OCI-LY7 (cell line): ENCODE measurements at regions of chr11 and their contacts with region 1.

Region 1: DNA sequence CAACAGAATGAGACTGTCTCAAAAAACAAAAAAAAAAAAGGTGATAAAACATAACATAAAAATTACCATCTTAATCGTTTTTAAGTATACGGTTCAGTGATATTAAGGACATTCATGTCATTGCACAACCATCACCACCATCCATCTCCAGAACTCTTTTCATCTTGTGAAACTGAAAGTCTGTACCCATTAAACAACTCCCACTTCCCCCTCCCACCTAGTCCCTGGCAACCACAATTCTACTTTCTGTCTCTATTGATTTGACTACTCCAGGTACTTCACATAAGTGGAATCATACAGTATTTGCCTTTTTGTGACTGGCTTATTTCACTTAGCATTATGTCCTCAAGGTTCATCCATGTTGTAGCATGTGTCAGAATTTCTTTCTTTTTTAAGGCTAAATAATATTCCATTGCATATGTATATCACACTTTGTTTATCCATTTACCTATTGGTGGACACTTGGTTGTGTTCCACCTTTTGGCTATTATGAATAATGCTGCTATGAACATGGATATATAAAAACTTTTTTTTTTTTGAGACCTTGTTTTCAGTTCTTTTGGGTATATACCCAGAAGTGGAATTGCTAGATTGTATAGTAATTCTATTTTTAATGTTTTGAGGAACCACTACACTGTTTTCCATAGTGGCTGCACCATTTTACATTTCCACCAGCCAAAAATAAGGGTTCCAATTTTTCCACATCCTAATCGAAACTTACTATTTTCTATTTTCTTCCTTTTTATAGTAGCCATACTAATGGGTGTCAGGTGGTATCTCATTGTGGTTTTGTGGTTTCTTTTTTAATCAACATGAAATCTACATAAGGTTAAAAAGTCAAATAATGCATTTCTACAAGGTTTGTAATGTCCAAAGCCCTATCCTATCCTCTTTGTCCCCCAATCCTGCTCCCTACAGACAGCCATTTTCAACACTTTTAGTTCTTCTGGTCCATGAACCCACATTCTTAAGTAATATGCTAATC is 23.4 kb upstream of the PIK3C2A start:
- DNase-seq: peak; percentile 27
- H3K4me3 ChIP-seq: no peak overlapping the region
- H3K27ac ChIP-seq: no peak overlapping the region
- H3K4me1 ChIP-seq: peaks cover 20% of the 10 kb centered on the region
- CTCF ChIP-seq: no peak

Region 2: DNA sequence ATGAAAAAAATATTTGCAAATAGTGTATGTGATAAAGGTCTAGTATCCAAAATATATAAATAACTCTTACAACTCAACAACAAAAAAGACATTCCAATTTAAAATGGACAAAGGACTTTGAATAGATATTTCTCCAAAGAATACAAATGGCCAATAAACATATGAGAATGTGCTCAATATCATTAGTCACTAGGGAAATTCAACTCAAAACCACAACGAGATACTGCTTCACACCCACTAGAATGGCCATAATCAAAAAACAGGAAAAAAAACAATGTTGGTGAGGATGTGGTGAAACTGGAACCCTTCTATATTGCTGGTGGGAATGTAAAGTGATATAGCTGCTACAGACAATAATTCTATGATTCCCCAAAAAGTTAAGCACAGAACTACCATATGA is 115.0 kb before region 1 on chr11:
- CTCF ChIA-PET with region 1: no interaction called
- POLR2A ChIA-PET with region 1: no interaction called
- intact Hi-C with region 1: no loop called
- DNase-seq: no peak
- H3K4me3 ChIP-seq: no peak overlapping the region
- H3K27ac ChIP-seq: no peak overlapping the region
- H3K4me1 ChIP-seq: no peaks in the 10 kb centered on the region
- CTCF ChIP-seq: no peak

Region 3: DNA sequence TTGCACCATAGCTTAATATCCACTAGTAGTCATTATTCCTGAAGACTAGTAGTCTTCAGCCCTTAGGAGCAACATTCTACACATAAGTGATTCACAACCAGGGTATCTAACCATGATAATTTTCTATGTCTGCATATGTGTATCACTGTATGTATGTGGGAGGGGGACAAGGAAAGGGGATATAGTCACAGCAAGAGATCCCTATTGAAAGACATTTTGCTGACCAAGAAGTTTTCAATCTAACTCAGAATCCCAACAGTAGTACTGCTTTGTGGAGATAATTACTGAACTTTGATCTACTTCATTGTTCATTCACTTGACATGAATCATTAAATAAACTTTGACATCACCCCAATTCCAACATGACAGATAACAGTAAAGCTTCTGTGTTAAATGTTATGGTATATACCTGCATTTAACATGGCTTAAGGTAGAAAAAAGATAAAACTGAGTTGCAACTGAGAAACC is 33.7 kb before region 1 on chr11:
- CTCF ChIA-PET with region 1: no interaction called
- POLR2A ChIA-PET with region 1: no interaction called
- intact Hi-C with region 1: no loop called
- DNase-seq: no peak
- H3K4me3 ChIP-seq: no peak overlapping the region
- H3K27ac ChIP-seq: no peak overlapping the region
- H3K4me1 ChIP-seq: peaks cover 9% of the 10 kb centered on the region
- CTCF ChIP-seq: no peak

Region 4: DNA sequence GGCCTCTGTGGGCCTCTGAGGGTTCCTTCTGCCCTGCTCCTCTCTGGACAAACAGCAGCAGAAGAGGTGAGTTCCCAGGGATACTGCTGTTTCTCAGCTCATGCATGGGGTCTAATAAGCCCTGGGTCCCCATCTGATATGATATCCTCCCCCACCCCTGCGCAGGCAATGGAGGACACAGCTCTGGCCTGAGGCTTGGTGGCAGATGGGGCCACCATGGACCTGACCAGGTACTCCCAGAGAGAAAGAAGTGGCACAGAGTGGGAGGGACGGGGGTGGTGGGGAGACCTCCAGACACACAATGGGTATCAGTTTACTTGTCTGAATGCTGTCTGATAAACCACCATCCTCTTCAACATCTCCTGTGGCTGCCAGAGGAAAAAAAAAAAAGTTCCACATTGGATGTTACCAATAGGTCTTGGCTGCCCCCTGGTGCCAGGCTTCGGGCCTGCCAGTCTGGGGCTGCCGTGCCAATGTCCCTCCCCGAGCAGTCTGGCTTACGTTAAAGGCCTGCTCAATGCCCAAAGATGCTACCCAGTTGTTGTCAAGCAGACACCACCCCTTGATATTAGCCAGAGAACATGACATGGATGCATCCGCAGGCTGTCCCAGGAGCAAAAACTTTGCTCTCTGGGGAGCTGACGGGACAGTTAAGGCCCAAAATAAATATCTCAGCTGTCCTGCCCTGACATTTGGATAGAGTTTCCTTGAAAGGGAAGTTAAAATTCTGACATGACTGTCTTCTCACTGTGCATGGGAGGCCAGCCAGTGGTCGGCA is 273.4 kb after region 1 on chr11:
- CTCF ChIA-PET with region 1: no interaction called
- POLR2A ChIA-PET with region 1: no interaction called
- intact Hi-C with region 1: loop called (anchors 1 kb)
- DNase-seq: peak; percentile 81
- H3K4me3 ChIP-seq: no peak overlapping the region
- H3K27ac ChIP-seq: no peak overlapping the region
- H3K4me1 ChIP-seq: no peaks in the 10 kb centered on the region
- CTCF ChIP-seq: peak; percentile 94